Naive thymus-derived CD4-positive, alpha-beta T cell (primary cell): ENCODE measurements at regions of chr11 and their contacts with region 1.

Region 1: GRCh38 chr11:67482825-67483798 is at the start of gene AIP:
- DNase-seq: peak; percentile 88 to 99 (median 98)
- ATAC-seq: peak; percentile 89
- H3K4me3 ChIP-seq: peak within 1 kb of the TSS; percentile 80
- H3K4me3 Mint-ChIP-seq: peak within 1 kb of the TSS; percentile 90 to 100 (median 96)
- H3K27ac ChIP-seq: peak within 1 kb of the TSS; percentile 80
- H3K27ac Mint-ChIP-seq: peak within 1 kb of the TSS; percentile 95 to 100 (median 99)
- H3K4me1 ChIP-seq: peaks cover 40 to 42% of the 10 kb centered on the region in 2 donors
- H3K4me1 Mint-ChIP-seq: peaks cover 40 to 57% (median 51%) of the 10 kb centered on the region in 7 donors
- H3K27me3 ChIP-seq: no peaks in the 10 kb centered on the region
- H3K27me3 Mint-ChIP-seq: peaks cover 0 to 5% (median 0%) of the 10 kb centered on the region in 5 donors
- total RNA-seq, gene AIP: 107 to 156 (median 137) TPM

Region 2: DNA sequence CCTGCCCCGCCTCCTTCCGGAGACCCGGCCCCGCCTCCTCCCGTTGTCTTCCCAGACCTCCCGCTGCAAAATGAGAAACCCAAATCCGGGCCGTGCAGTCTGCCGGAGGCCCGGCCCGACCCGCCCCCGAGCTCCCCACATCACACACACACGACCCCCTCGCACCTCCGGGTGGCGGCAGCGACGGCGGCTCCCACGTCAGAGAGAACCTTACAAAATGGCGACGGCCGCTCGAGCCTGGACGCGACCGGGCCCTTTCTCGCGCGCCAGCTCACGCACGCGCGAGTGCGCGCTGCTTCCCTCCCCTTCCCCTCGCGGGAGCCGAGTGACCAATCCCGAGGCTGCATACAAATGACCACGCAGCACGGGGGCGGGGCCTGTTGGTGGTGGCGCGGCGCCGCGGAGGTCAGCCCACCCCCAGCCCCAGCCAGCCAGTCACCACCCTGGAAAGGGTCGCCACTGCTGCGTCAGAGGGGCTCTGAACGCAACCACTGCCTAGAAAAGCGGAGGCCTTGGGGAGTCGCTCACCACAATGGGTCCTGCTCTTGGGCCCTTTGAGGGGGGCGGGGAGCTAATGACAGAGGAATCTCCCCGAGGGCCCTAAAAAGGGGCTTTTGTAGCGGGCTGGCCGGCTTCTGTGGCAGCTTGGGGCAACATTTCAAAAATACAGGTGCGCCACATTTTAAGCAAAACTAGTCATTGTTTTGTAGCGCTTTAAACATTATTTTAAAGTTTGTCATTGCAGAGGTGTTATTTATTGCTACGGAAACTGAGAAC is 805.3 kb before region 1 on chr11 and contains the start of gene RBM4B:
- CTCF ChIA-PET with region 1: no interaction called
- POLR2A ChIA-PET with region 1: no interaction called
- intact Hi-C with region 1: loop called in 1 of 2 experiments (anchors 5 kb)
- DNase-seq: peak; percentile 89 to 96 (median 94)
- ATAC-seq: peak; percentile 94
- H3K4me3 ChIP-seq: peak within 1 kb of the TSS; percentile 100
- H3K4me3 Mint-ChIP-seq: peak within 1 kb of the TSS; percentile 87 to 98 (median 96)
- H3K27ac ChIP-seq: peak within 1 kb of the TSS; percentile 95
- H3K27ac Mint-ChIP-seq: peak within 1 kb of the TSS; percentile 94 to 100 (median 99)
- H3K4me1 ChIP-seq: peaks cover 23 to 31% of the 10 kb centered on the region in 2 donors
- H3K4me1 Mint-ChIP-seq: peaks cover 21 to 49% (median 37%) of the 10 kb centered on the region in 7 donors
- H3K27me3 ChIP-seq: no peaks in the 10 kb centered on the region
- H3K27me3 Mint-ChIP-seq: no peaks in the 10 kb centered on the region
- total RNA-seq, gene RBM4B: 9.8 to 27.2 (median 19.7) TPM

Region 3: GRCh38 chr11:67239783-67240575 is 243.1 kb before region 1 on chr11:
- CTCF ChIA-PET with region 1: no interaction called
- POLR2A ChIA-PET with region 1: interaction called, 4 read pairs
- intact Hi-C with region 1: loop called in 1 of 2 experiments (anchors 1 kb)
- DNase-seq: peak; percentile 81 to 99 (median 98)
- ATAC-seq: peak; percentile 94
- H3K4me3 ChIP-seq: peak overlapping the region; percentile 89
- H3K4me3 Mint-ChIP-seq: peak overlapping the region; percentile 93 to 100 (median 98)
- H3K27ac ChIP-seq: peak overlapping the region; percentile 97
- H3K27ac Mint-ChIP-seq: peak overlapping the region; percentile 92 to 100 (median 99)
- H3K4me1 ChIP-seq: peaks cover 24 to 41% of the 10 kb centered on the region in 2 donors
- H3K4me1 Mint-ChIP-seq: peaks cover 47 to 62% (median 61%) of the 10 kb centered on the region in 7 donors
- H3K27me3 ChIP-seq: no peaks in the 10 kb centered on the region
- H3K27me3 Mint-ChIP-seq: no peaks in the 10 kb centered on the region

Region 4: GRCh38 chr11:67401495-67402191 is 81.5 kb before region 1 on chr11 and contains the start of gene PPP1CA:
- CTCF ChIA-PET with region 1: interaction called, 4 read pairs
- POLR2A ChIA-PET with region 1: interaction called, 106 read pairs
- intact Hi-C with region 1: loop called (anchors 1 to 2 kb)
- DNase-seq: peak; percentile 87 to 99 (median 92)
- ATAC-seq: peak; percentile 93
- H3K4me3 ChIP-seq: peak within 1 kb of the TSS; percentile 98
- H3K4me3 Mint-ChIP-seq: peak within 1 kb of the TSS; percentile 90 to 100 (median 96)
- H3K27ac ChIP-seq: peak within 1 kb of the TSS; percentile 87
- H3K27ac Mint-ChIP-seq: peak within 1 kb of the TSS; percentile 81 to 97 (median 95)
- H3K4me1 ChIP-seq: peaks cover 55 to 63% of the 10 kb centered on the region in 2 donors
- H3K4me1 Mint-ChIP-seq: peaks cover 22 to 59% (median 52%) of the 10 kb centered on the region in 7 donors
- H3K27me3 ChIP-seq: no peaks in the 10 kb centered on the region
- H3K27me3 Mint-ChIP-seq: no peaks in the 10 kb centered on the region
- total RNA-seq, gene PPP1CA: 83.0 to 339 (median 122) TPM

Region 5: GRCh38 chr11:67420646-67421420 is 62.3 kb before region 1 on chr11:
- CTCF ChIA-PET with region 1: no interaction called
- POLR2A ChIA-PET with region 1: interaction called, 56 read pairs
- intact Hi-C with region 1: loop called in 1 of 2 experiments (anchors 1 kb)
- DNase-seq: peak; percentile 97 to 100 (median 97)
- ATAC-seq: peak; percentile 96
- H3K4me3 ChIP-seq: peak overlapping the region; percentile 56
- H3K4me3 Mint-ChIP-seq: peak overlapping the region; percentile 74 to 92 (median 82)
- H3K27ac ChIP-seq: peak overlapping the region; percentile 77
- H3K27ac Mint-ChIP-seq: peak overlapping the region; percentile 69 to 98 (median 92)
- H3K4me1 ChIP-seq: peaks cover 42 to 49% of the 10 kb centered on the region in 2 donors
- H3K4me1 Mint-ChIP-seq: peaks cover 24 to 60% (median 53%) of the 10 kb centered on the region in 7 donors
- H3K27me3 ChIP-seq: no peaks in the 10 kb centered on the region
- H3K27me3 Mint-ChIP-seq: peaks cover 0 to 15% (median 0%) of the 10 kb centered on the region in 5 donors

Region 6: GRCh38 chr11:67439321-67439883 is 43.7 kb before region 1 on chr11:
- CTCF ChIA-PET with region 1: interaction called, 11 read pairs
- POLR2A ChIA-PET with region 1: interaction called, 69 read pairs
- intact Hi-C with region 1: loop called (anchors 1 to 2 kb)
- DNase-seq: peak in 1 of 9 donors; percentile 55
- ATAC-seq: no peak
- H3K4me3 ChIP-seq: peak overlapping the region; percentile 100
- H3K4me3 Mint-ChIP-seq: peak overlapping the region; percentile 85 to 99 (median 97)
- H3K27ac ChIP-seq: peak overlapping the region; percentile 85
- H3K27ac Mint-ChIP-seq: peak overlapping the region; percentile 90 to 97 (median 95)
- H3K4me1 ChIP-seq: peaks cover 38 to 64% of the 10 kb centered on the region in 2 donors
- H3K4me1 Mint-ChIP-seq: peaks cover 40 to 74% (median 55%) of the 10 kb centered on the region in 7 donors
- H3K27me3 ChIP-seq: no peaks in the 10 kb centered on the region
- H3K27me3 Mint-ChIP-seq: no peaks in the 10 kb centered on the region

Region 7: GRCh38 chr11:67630228-67630942 is 147.3 kb after region 1 on chr11:
- CTCF ChIA-PET with region 1: no interaction called
- POLR2A ChIA-PET with region 1: no interaction called
- intact Hi-C with region 1: loop called in 1 of 2 experiments (anchors 1 kb)
- DNase-seq: peak in 8 of 9 donors; percentile 40 to 97 (median 86)
- ATAC-seq: peak; percentile 87
- H3K4me3 ChIP-seq: peak overlapping the region; percentile 84
- H3K4me3 Mint-ChIP-seq: peak overlapping the region; percentile 84 to 94 (median 89)
- H3K27ac ChIP-seq: peak overlapping the region; percentile 85
- H3K27ac Mint-ChIP-seq: peak overlapping the region; percentile 74 to 96 (median 89)
- H3K4me1 ChIP-seq: peaks cover 8 to 9% of the 10 kb centered on the region in 2 donors
- H3K4me1 Mint-ChIP-seq: peaks cover 5 to 15% (median 7%) of the 10 kb centered on the region in 7 donors
- H3K27me3 ChIP-seq: no peaks in the 10 kb centered on the region
- H3K27me3 Mint-ChIP-seq: no peaks in the 10 kb centered on the region

Region 8: GRCh38 chr11:67656278-67656922 is 173.3 kb after region 1 on chr11:
- CTCF ChIA-PET with region 1: no interaction called
- POLR2A ChIA-PET with region 1: no interaction called
- intact Hi-C with region 1: no loop called
- DNase-seq: no peak
- ATAC-seq: no peak
- H3K4me3 ChIP-seq: no peak overlapping the region
- H3K4me3 Mint-ChIP-seq: no peak overlapping the region
- H3K27ac ChIP-seq: no peak overlapping the region
- H3K27ac Mint-ChIP-seq: peak overlapping the region in 1 of 9 donors; percentile 49
- H3K4me1 ChIP-seq: no peaks in the 10 kb centered on the region
- H3K4me1 Mint-ChIP-seq: peaks cover 0 to 5% (median 0%) of the 10 kb centered on the region in 7 donors
- H3K27me3 ChIP-seq: no peaks in the 10 kb centered on the region
- H3K27me3 Mint-ChIP-seq: peaks cover 0 to 17% (median 0%) of the 10 kb centered on the region in 5 donors